ENCODE measurements at regions of chr12 and their contacts with region 1.

Region 1: DNA sequence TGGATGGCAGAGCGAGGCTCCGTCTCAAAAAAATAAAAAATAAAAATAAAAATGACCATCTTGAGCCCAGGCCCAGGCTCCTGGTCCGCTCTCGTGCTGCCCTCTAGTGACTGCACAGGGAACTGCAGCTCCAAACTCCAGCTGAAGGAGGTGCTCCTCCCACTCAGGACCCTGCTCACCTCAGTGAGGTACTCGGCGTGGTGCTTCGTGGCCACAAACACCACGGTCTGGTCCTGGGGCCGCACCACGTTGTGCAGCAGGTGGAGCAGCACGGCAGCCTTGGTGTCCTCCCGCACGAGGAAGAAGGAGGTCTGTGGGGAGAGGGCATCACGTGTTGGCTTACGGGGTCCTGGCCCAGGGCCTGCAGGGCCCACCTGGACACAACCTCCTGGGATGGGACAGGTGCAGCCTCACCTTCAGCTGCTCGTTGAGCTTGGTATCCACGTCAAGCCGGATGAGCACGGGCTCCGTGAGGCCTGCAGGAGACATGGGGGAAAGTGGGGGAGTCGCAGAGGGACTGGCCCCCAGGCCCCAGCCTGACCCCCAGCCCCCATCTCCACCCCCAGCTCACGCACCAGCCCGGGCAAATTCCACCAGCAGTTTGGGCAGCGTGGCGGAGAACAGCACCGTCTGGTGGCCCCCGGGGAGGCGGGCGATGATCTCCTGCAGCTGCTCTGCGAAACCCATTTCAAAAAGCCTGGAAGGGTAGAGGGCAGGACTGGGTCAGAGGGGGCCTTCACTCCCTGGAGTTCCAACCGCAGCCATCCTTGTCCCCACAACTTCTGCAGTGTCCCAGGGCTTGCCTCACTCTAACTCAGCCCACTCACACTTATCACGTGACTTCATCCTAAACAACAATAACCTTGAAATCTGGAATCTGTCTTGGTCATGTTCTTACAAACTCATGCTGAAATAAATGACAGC is 10.6 kb downstream of the DDX54 start:
- DNase-seq: peak; percentile 83
- ATAC-seq: peak; percentile 77
- H3K4me3 ChIP-seq: no peak overlapping the region
- H3K4me3 Mint-ChIP-seq: no peak overlapping the region
- H3K27ac ChIP-seq: no peak overlapping the region
- H3K27ac Mint-ChIP-seq: peak overlapping the region; percentile 61
- H3K4me1 ChIP-seq: peaks cover 20 to 30% of the 10 kb centered on the region in 2 donors
- H3K4me1 Mint-ChIP-seq: peaks cover 37% of the 10 kb centered on the region
- H3K27me3 ChIP-seq: no peaks in the 10 kb centered on the region
- H3K27me3 Mint-ChIP-seq: no peaks in the 10 kb centered on the region
- CTCF ChIP-seq: peak; percentile 98

Region 2: GRCh38 chr12:113048716-113049127 is 126.0 kb before region 1 on chr12:
- CTCF ChIA-PET with region 1: interaction called, 127 read pairs
- POLR2A ChIA-PET with region 1: interaction called, 5 read pairs
- intact Hi-C with region 1: loop called (anchors 1 kb)
- DNase-seq: peak; percentile 84
- ATAC-seq: peak; percentile 55
- H3K4me3 ChIP-seq: no peak overlapping the region
- H3K4me3 Mint-ChIP-seq: peak overlapping the region; percentile 37
- H3K27ac ChIP-seq: peak overlapping the region; percentile 39 to 53
- H3K27ac Mint-ChIP-seq: peak overlapping the region; percentile 43
- H3K4me1 ChIP-seq: peaks cover 48 to 50% of the 10 kb centered on the region in 2 donors
- H3K4me1 Mint-ChIP-seq: peaks cover 47% of the 10 kb centered on the region
- H3K27me3 ChIP-seq: no peaks in the 10 kb centered on the region
- H3K27me3 Mint-ChIP-seq: peaks cover 5% of the 10 kb centered on the region
- CTCF ChIP-seq: peak; percentile 85

Region 3: DNA sequence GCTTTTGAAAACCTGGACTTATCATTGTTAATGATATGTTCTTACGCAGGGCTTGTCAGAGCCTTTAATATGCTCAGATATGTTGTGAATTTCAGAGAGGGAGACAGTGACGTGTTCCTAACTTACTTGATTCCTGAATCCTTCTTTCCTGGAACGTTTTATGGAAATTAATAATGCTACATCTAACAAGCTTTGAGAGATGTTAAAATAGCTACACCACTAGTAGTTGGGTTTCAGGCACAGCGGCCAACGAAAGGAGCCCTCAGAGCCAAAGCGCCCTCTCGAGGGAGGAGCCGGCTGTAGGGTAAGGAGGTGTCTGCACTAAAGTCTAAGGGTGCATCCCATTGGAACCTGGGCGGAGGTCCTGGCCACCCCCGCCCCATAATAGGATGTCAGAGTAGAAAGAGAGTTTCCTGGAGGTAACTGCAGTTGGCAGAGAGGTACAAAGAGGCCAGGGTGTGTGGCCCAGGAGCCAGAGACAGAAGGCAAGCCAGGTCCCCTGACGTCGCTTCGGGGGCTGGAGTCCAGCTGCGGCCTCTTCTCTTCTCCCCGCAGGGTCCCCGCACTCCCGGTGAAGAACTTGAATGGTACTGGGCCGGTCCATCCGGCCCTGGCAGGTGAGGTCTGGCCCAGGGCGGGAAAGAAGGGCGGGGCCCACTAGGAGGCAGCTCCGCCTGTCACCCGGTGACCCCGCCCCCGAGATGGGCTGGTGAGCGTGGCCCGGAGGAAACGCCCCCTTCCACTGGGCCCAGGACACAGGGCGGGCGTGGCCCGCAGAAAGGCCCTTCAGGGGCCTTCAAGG is 81.9 kb before region 1 on chr12:
- CTCF ChIA-PET with region 1: interaction called, 58 read pairs
- POLR2A ChIA-PET with region 1: interaction called, 6 read pairs
- intact Hi-C with region 1: loop called (anchors 2 kb)
- DNase-seq: peak; percentile 72
- ATAC-seq: peak; percentile 69
- H3K4me3 ChIP-seq: peak overlapping the region in 3 of 5 experiments; percentile 5 to 58 (median 38)
- H3K4me3 Mint-ChIP-seq: peak overlapping the region; percentile 74
- H3K27ac ChIP-seq: peak overlapping the region; percentile 56 to 62
- H3K27ac Mint-ChIP-seq: peak overlapping the region; percentile 68
- H3K4me1 ChIP-seq: peaks cover 54 to 61% of the 10 kb centered on the region in 2 donors
- H3K4me1 Mint-ChIP-seq: peaks cover 58% of the 10 kb centered on the region
- H3K27me3 ChIP-seq: no peaks in the 10 kb centered on the region
- H3K27me3 Mint-ChIP-seq: no peaks in the 10 kb centered on the region
- CTCF ChIP-seq: peak; percentile 36

Region 4: GRCh38 chr12:113109872-113110599 is 64.7 kb before region 1 on chr12:
- CTCF ChIA-PET with region 1: interaction called, 10 read pairs
- POLR2A ChIA-PET with region 1: no interaction called
- intact Hi-C with region 1: no loop called
- DNase-seq: no peak
- ATAC-seq: no peak
- H3K4me3 ChIP-seq: no peak overlapping the region
- H3K4me3 Mint-ChIP-seq: no peak overlapping the region
- H3K27ac ChIP-seq: no peak overlapping the region
- H3K27ac Mint-ChIP-seq: no peak overlapping the region
- H3K4me1 ChIP-seq: no peaks in the 10 kb centered on the region
- H3K4me1 Mint-ChIP-seq: peaks cover under 1% of the 10 kb centered on the region
- H3K27me3 ChIP-seq: no peaks in the 10 kb centered on the region
- H3K27me3 Mint-ChIP-seq: peaks cover 3% of the 10 kb centered on the region
- CTCF ChIP-seq: no peak

Region 5: DNA sequence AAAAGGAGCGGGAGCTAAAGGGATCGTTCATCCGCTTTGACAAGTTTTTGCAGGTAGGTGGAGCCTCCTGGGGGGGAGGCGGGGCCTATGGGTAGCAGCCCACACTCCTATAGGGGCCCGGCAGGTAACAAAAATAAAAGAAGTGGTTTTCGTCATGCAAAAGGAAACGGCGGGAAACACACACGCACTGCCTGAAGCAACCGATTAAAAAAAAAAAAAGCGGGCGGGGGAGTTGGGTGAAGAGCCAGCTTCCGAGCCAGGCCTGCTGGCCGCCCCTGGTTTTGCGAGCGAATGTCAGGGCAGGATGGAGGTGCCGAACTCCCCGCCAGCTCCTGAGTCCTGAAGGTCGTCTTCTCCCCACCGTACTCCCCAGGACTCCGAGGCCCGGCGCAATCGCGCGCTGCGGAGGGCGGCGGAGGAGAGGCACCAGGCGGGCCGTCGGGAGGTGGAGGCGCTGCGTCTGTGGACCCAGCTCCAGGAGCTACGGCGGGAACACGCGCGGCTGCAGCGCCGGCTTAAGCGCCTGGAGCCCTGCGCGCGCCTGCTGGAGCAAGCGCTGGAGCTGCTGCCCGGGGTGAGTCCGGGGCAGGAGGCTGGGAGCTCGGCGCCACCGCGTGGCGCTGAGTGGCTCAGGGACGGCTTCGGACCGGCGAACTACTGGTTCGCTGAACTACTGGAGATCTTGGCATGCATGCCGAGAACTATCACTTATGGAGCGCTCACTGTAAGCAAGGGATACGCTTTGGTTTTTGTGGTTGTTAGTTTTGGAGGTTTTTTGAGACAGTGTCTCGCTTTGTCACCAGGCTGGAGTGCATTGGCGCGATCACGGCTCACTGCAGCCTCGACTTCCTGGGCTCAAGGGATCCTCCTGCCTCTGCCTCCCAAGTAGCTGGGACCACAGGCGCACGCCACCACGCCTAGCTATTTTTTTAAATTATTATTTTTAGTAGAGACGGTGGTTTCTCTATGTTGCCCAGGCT is 21.6 kb before region 1 on chr12:
- CTCF ChIA-PET with region 1: interaction called, 73 read pairs
- POLR2A ChIA-PET with region 1: interaction called, 6 read pairs
- intact Hi-C with region 1: no loop called
- DNase-seq: peak; percentile 72
- ATAC-seq: peak; percentile 73
- H3K4me3 ChIP-seq: peak overlapping the region; percentile 34 to 61 (median 56)
- H3K4me3 Mint-ChIP-seq: peak overlapping the region; percentile 88
- H3K27ac ChIP-seq: no peak overlapping the region
- H3K27ac Mint-ChIP-seq: no peak overlapping the region
- H3K4me1 ChIP-seq: peaks cover 15 to 32% of the 10 kb centered on the region in 2 donors
- H3K4me1 Mint-ChIP-seq: peaks cover 26% of the 10 kb centered on the region
- H3K27me3 ChIP-seq: peaks cover 0 to 25% (median 8%) of the 10 kb centered on the region in 4 experiments
- H3K27me3 Mint-ChIP-seq: peaks cover 6% of the 10 kb centered on the region
- CTCF ChIP-seq: peak; percentile 23

Region 6: DNA sequence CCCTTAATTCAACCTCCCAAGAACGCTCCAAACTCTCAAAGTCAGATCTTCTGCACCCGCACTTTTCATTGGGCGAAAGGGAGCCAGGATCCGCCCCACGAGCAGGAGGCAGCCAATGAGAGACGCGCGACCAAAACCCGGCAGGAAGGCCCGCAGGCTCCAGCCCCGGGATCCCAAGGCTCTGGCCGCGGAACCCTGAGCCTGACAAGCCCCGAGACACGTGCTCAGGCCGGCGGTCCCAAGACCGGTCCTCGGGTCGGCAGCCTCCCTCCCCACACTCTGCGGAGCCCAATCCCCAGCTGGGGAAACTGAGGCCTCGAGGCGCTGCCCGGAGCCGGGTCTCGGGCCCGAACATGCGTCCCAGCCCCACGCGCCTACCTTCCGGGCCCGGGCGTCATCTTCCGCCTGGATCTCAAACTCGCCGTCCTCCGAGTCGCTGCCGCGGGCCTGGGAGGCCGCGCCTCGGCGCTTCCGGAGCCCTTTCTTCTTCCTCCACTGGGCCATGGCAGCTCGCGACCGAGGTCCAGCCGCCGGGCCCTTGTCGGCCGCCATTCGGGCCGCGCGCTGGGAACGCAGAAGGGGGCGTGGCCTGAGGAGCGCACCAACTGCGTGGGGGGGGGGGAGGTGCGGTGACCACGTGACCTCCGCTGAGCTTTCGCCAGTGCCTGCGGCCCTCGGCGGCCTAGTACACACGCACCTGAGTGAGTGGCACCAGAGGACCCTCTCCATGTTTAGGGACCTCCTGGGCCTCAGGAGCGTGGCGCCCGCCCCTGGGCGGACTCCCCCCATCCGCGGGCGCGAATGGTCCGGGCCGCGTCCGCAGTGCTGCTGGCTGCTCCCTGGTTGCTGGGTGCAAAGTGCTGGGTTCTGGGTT is 10.4 kb after region 1 on chr12 and contains the starts of genes DDX54 and RITA1:
- CTCF ChIA-PET with region 1: interaction called, 15 read pairs
- POLR2A ChIA-PET with region 1: interaction called, 8 read pairs
- intact Hi-C with region 1: loop called (anchors 1 kb)
- DNase-seq: peak; percentile 95
- ATAC-seq: peak; percentile 84
- H3K4me3 ChIP-seq: peak within 1 kb of the TSS; percentile 51 to 100 (median 94)
- H3K4me3 Mint-ChIP-seq: peak within 1 kb of the TSS; percentile 95
- H3K27ac ChIP-seq: peak within 1 kb of the TSS; percentile 98
- H3K27ac Mint-ChIP-seq: peak within 1 kb of the TSS; percentile 96
- H3K4me1 ChIP-seq: peaks cover 25 to 34% of the 10 kb centered on the region in 2 donors
- H3K4me1 Mint-ChIP-seq: peaks cover 38% of the 10 kb centered on the region
- H3K27me3 ChIP-seq: no peaks in the 10 kb centered on the region
- H3K27me3 Mint-ChIP-seq: no peaks in the 10 kb centered on the region
- CTCF ChIP-seq: no peak
- total RNA-seq, gene DDX54: 90.1 and 101 TPM in 2 replicates
- total RNA-seq, gene RITA1: 16.2 and 17.9 TPM in 2 replicates